Activated B cell treated with CpG ODN at 0.5 μM for 24 hours (primary cell): ENCODE measurements at regions of chr11 and their contacts with region 1.

Region 1: DNA sequence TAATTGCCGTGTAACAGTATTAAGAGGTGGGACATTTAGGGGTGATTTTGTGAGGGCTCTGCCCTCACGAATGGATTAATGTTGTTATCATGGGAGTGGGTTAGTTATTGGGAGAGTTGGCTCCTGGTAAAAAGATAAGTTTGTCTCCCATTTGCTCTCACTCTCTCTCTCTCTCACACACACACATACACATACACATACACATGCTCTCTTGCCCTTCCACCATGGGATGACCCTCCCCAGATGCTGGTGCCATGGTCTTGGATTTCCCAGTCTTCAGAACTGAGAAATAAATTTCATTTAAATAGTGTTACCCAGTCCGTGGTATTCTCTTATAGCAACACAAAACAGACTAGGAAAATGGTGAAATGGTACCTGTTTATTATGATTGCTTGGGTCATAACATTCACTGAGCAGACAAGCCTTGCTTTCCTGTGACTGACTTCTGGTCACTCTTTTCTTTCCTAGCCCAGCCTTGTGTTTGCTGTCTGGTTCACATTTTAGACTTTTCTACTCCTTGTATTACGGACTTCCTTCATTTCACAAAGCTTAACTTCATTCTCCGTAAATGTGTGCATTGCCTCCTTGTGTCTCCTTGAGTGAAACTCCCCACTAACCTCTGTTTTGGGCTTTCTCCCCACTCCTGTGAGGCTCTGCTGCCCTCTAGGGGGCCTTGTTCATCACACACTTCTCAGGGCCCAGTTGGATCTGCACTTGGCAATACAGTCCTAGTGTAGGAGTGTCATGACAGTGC is 206.5 kb upstream of the CTSC start:
- DNase-seq: peak; percentile 32
- ATAC-seq: peak; percentile 65
- H3K4me3 Mint-ChIP-seq: no peak overlapping the region
- H3K27ac Mint-ChIP-seq: no peak overlapping the region
- H3K4me1 Mint-ChIP-seq: no peaks in the 10 kb centered on the region
- H3K27me3 Mint-ChIP-seq: peaks cover 1% of the 10 kb centered on the region
- CTCF ChIP-seq: no peak

Region 2: GRCh38 chr11:86938900-86939880 is 1604.9 kb before region 1 on chr11:
- CTCF ChIA-PET with region 1: no interaction called
- POLR2A ChIA-PET with region 1: no interaction called
- intact Hi-C with region 1: loop called (anchors 10 kb)
- DNase-seq: no peak
- ATAC-seq: no peak
- H3K4me3 Mint-ChIP-seq: no peak overlapping the region
- H3K27ac Mint-ChIP-seq: no peak overlapping the region
- H3K4me1 Mint-ChIP-seq: no peaks in the 10 kb centered on the region
- H3K27me3 Mint-ChIP-seq: no peaks in the 10 kb centered on the region
- CTCF ChIP-seq: no peak

Region 3: GRCh38 chr11:87878373-87878779 is 665.7 kb before region 1 on chr11:
- CTCF ChIA-PET with region 1: no interaction called
- POLR2A ChIA-PET with region 1: no interaction called
- intact Hi-C with region 1: loop called (anchors 2 kb)
- DNase-seq: no peak
- ATAC-seq: no peak
- H3K4me3 Mint-ChIP-seq: no peak overlapping the region
- H3K27ac Mint-ChIP-seq: no peak overlapping the region
- H3K4me1 Mint-ChIP-seq: no peaks in the 10 kb centered on the region
- H3K27me3 Mint-ChIP-seq: no peaks in the 10 kb centered on the region
- CTCF ChIP-seq: no peak

Region 4: DNA sequence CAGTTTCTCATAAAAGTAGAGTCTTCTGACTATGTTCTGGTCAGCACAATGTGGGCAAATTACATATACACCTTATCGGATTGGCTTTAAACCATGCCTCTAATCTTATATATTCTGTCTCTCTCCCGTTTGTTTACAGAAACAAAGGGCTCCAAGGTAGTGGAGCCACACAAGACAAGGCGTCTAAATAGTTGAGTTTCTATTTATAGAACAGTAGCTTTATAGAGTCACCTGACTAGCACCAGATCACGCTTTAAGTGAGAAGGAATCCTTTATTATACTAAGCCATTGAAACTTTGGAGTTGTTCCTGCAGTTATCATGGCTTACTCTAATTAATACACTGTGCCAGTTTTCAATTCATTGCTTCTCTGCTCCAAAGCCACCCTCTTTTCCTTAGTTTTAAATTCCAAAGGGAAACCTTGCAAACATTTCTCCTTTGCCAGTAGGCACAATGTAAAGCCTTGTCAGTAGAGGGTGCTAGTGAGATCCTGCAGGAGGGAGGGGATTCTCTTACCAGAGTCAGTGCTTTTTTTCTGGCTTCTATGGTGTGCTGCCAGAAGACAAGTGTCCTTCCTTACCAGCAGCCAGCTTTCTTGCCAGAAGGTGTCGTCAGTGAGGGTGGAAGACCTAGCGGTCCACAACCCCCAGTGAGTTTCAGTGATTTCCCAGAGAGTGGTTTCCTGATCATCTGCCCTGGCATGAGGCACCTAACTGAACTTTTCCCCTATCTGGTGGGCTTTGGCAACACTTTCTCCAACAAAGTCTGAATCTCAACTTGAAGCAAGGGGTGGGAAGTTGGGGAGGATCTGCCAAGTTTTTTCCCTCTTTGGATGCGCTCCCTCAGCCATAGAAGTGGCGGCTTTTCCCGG is 440.5 kb before region 1 on chr11:
- CTCF ChIA-PET with region 1: interaction called, 8 read pairs
- POLR2A ChIA-PET with region 1: no interaction called
- intact Hi-C with region 1: loop called (anchors 1 kb)
- DNase-seq: no peak
- ATAC-seq: no peak
- H3K4me3 Mint-ChIP-seq: no peak overlapping the region
- H3K27ac Mint-ChIP-seq: no peak overlapping the region
- H3K4me1 Mint-ChIP-seq: no peaks in the 10 kb centered on the region
- H3K27me3 Mint-ChIP-seq: no peaks in the 10 kb centered on the region
- CTCF ChIP-seq: no peak

Region 5: DNA sequence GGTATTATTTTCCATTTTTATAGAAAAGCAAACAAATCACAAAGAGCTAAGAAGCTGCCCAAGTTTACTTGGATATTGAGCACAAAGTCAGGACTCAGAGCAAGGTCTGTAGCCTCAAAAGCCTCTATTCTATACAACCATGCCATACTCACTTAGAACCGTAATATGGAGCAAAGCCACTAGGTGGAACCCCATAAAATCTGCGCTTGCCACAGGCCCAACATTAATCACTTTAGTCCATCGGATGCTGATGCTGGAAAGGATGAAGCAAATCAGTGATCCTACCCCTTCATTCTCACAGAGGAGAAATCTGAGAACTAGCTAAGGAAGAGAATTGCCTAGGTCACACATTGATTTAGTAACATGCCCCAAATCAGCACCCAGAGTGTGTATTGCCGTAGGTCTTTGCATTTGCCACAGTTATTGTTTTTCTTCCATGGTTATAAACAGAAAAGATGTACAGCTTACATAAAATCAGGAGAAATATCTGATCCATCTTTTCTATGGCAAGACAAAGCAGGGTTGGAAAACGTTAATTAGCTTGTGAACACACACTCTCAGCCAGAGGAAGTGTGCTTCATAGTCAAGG is 312.1 kb before region 1 on chr11:
- CTCF ChIA-PET with region 1: no interaction called
- POLR2A ChIA-PET with region 1: no interaction called
- intact Hi-C with region 1: loop called (anchors 1 kb)
- DNase-seq: no peak
- ATAC-seq: no peak
- H3K4me3 Mint-ChIP-seq: no peak overlapping the region
- H3K27ac Mint-ChIP-seq: no peak overlapping the region
- H3K4me1 Mint-ChIP-seq: no peaks in the 10 kb centered on the region
- H3K27me3 Mint-ChIP-seq: no peaks in the 10 kb centered on the region
- CTCF ChIP-seq: no peak

Region 6: DNA sequence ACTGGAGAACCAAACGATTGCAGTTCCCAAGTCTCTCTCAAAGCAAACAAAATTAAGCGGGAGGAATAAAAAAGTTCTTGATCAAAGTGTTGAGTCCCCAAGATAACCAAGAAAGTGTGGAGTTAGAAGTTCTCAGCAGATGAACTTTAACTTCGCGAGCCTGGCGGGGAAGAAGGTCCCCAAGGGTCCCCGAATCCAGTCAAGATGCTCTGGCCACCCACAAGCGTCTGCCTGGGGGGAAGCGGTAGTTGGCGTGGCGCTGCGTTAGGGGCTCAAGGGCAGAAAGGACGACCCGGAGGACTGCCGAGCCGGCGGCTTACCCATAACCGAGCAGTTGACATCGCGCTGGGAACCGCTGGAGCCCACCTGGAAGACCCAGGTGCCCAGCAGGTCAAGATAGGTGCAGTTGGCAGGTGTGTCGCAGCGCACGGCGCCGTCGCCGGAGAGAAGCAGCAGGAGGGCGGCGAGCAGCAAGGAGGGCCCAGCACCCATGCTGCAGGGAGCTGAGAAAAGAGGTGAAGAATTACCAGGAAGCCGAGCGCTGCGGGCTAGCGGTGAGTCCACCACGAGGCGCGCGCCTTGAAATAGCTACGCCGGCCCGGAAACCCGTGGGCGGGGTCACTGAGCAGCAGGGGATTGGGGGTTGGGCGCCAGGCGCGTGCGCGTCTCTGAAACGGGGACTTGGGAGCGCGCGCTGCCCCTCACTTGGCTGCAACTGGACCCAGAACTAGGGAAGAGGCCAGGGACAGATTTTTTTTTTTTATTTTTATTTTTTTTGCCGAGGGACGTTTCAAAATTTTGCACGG is 206.7 kb before region 1 on chr11 and contains the start of gene CTSC:
- CTCF ChIA-PET with region 1: no interaction called
- POLR2A ChIA-PET with region 1: no interaction called
- intact Hi-C with region 1: no loop called
- DNase-seq: peak; percentile 80
- ATAC-seq: peak; percentile 91
- H3K4me3 Mint-ChIP-seq: peak within 1 kb of the TSS; percentile 100
- H3K27ac Mint-ChIP-seq: peak within 1 kb of the TSS; percentile 86
- H3K4me1 Mint-ChIP-seq: peaks cover 43% of the 10 kb centered on the region
- H3K27me3 Mint-ChIP-seq: no peaks in the 10 kb centered on the region
- CTCF ChIP-seq: no peak
- total RNA-seq, gene CTSC: 30.6 and 31.2 TPM in 2 replicates

Region 7: GRCh38 chr11:88603091-88603867 is 59.2 kb after region 1 on chr11:
- CTCF ChIA-PET with region 1: no interaction called
- POLR2A ChIA-PET with region 1: no interaction called
- intact Hi-C with region 1: no loop called
- DNase-seq: no peak
- ATAC-seq: no peak
- H3K4me3 Mint-ChIP-seq: no peak overlapping the region
- H3K27ac Mint-ChIP-seq: no peak overlapping the region
- H3K4me1 Mint-ChIP-seq: no peaks in the 10 kb centered on the region
- H3K27me3 Mint-ChIP-seq: no peaks in the 10 kb centered on the region
- CTCF ChIP-seq: no peak

Region 8: GRCh38 chr11:89293965-89294679 is 750.0 kb after region 1 on chr11:
- CTCF ChIA-PET with region 1: no interaction called
- POLR2A ChIA-PET with region 1: no interaction called
- intact Hi-C with region 1: no loop called
- DNase-seq: no peak
- ATAC-seq: no peak
- H3K4me3 Mint-ChIP-seq: no peak overlapping the region
- H3K27ac Mint-ChIP-seq: no peak overlapping the region
- H3K4me1 Mint-ChIP-seq: no peaks in the 10 kb centered on the region
- H3K27me3 Mint-ChIP-seq: no peaks in the 10 kb centered on the region
- CTCF ChIP-seq: no peak